ENCODE measurements at regions of chr6 and their contacts with region 1.

Region 1: DNA sequence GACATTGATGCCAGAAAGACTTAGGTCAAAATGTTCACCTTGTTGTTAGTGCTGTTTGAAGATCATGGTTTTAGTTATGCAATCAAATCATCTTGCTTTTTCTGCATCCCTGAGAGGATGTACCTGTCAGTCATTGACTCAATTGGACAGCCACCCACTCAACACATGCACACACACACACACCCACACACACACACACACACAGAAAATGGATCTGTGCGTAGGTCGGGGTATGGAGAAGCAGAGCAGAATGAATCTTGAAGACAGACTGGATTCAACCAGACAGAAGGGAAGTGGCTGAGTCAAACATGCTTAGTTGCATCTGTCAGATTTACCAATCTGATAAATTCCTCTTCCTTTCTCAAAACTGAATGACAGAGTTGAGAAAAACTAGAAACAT is 19.1 kb upstream of the ZSCAN23 start:
- DNase-seq: no peak
- ATAC-seq: no peak
- H3K4me3 ChIP-seq: no peak overlapping the region
- H3K27ac ChIP-seq: no peak overlapping the region
- H3K4me1 ChIP-seq: no peaks in the 10 kb centered on the region
- H3K27me3 ChIP-seq: 0 out of 2 replicates have a peak, but pooled peaks cover 2% of the 10 kb centered on the region
- CTCF ChIP-seq: no peak
- POLR2A ChIP-seq: no peak
- RAD21 ChIP-seq: no peak

Region 2: DNA sequence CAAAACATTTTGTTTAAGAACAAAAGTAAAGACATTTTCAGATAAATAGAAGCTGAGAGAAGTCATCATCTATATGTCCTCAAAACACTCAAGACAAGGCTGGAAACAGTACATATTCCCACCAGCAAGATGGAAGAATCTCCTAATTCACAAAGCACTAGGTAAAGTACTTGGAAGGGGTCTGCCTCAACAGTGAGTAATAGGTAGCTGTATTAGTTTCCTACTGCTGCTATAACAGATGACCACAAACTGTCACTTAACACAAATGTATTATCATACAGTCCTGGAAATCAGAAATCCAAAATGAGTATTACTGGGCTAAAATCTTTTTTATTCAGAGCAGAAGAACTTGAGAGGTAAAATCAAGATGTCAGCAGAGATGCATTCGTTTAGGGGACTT is 280.1 kb before region 1 on chr6:
- CTCF ChIA-PET with region 1: no interaction called
- POLR2A ChIA-PET with region 1: no interaction called
- dilution Hi-C with region 1: no loop called
- in situ Hi-C with region 1: no loop called
- intact Hi-C with region 1: no loop called
- DNase-seq: no peak
- ATAC-seq: no peak
- H3K4me3 ChIP-seq: no peak overlapping the region
- H3K27ac ChIP-seq: no peak overlapping the region
- H3K4me1 ChIP-seq: no peaks in the 10 kb centered on the region
- H3K27me3 ChIP-seq: no peaks in the 10 kb centered on the region
- CTCF ChIP-seq: no peak
- POLR2A ChIP-seq: no peak
- RAD21 ChIP-seq: no peak

Region 3: DNA sequence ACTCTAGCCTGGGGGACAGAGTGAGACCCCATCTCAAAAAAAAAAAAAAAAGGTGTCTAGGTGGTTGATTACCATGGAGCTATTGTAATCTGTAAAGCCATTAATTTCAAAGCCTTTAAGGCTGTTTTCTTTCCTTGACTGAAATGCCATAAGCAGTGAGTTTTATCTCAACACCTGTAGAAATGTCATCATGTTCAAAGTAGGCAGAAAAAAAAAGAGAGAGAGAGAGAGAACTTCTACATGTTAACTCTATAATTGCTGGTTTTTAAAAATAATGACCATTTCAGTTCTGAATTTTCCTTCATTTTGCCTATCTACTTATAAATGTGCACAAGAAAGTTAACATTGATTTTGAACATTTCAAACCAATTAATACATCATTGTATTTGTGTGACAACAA is 1569.0 kb after region 1 on chr6:
- CTCF ChIA-PET with region 1: no interaction called
- POLR2A ChIA-PET with region 1: no interaction called
- dilution Hi-C with region 1: no loop called
- in situ Hi-C with region 1: no loop called
- intact Hi-C with region 1: loop called (anchors 5 kb)
- DNase-seq: no peak
- ATAC-seq: no peak
- H3K4me3 ChIP-seq: no peak overlapping the region
- H3K27ac ChIP-seq: no peak overlapping the region
- H3K4me1 ChIP-seq: no peaks in the 10 kb centered on the region; the same call in 1 of the 2 replicates
- H3K27me3 ChIP-seq: no peaks in the 10 kb centered on the region
- CTCF ChIP-seq: no peak
- POLR2A ChIP-seq: no peak
- RAD21 ChIP-seq: no peak